WTC11 (cell line): ENCODE measurements at regions of chr12 and their contacts with region 1.

Region 1: GRCh38 chr12:49828133-49829091 is at the start of gene NCKAP5L:
- DNase-seq: peak; percentile 97
- ATAC-seq: peak; percentile 89
- H3K4me3 Mint-ChIP-seq: peak within 1 kb of the TSS; percentile 93
- H3K27ac Mint-ChIP-seq: peak within 1 kb of the TSS; percentile 100
- H3K4me1 Mint-ChIP-seq: peaks cover 33% of the 10 kb centered on the region
- H3K27me3 Mint-ChIP-seq: no peaks in the 10 kb centered on the region; the same call in 1 of the 2 replicates
- CTCF ChIP-seq: no peak
- total RNA-seq, gene NCKAP5L: 22.1 to 27.8 TPM (median 22.4 TPM) in 3 replicates

Region 2: DNA sequence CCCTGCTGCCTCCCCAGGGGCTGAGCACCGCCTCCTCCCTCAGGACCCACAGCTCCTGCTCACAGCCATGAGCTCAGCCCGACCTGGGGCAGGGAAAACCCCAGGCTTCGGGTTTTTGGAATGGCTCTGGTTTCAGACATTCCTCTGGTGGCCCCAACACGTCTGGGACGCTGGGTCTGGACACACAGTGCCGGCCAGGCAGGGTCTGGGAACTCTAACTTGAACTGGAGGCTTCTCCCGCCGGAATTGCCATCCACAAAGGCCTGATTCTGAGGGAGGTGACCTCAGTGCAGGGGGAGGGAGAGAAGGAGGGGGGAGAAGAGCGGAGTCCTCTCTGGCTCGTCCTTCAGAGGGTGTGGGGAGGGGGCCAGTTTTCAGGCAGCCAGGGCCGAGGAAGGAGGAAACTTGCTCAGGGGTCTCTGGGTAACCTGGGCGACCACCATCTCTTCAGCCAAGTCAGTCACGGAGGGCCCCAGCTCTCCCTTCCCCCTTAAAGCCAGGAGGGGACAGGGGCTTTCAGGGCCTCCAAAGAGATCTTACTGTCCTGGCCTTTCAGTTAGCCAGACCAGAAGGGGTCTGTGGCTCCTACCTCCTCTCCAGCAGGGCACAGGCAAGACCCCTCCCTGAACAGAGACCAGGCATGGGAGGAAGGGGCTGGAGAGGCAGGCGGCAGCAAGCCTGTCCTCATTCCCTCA is 19.6 kb before region 1 on chr12:
- CTCF ChIA-PET with region 1: interaction called, 13 read pairs
- POLR2A ChIA-PET with region 1: interaction called, 7 read pairs
- DNase-seq: peak; percentile 36
- ATAC-seq: peak; percentile 9; the same call in 1 of the 2 replicates
- H3K4me3 Mint-ChIP-seq: no peak overlapping the region
- H3K27ac Mint-ChIP-seq: peak overlapping the region; percentile 90
- H3K4me1 Mint-ChIP-seq: peaks cover 42% of the 10 kb centered on the region
- H3K27me3 Mint-ChIP-seq: no peaks in the 10 kb centered on the region
- CTCF ChIP-seq: no peak

Region 3: DNA sequence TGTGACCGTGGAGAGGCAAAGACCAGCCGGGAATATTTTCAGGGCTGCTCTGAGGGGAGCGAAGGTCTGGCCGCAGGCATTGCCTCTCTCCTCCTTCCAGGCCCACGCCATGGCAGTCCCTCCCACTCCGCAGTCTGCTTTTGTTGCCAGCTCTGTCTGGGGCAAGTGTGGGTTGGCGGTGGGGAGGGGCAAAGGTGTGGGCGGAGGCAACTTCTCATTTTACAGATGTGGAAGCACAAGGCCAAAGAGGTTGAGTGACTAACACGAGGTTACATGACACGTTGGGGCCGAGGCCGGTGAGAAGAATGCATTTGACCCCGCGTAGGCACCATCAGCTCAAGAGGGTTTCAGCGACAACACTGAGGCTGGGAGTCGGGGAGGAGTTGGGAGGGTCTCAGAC is 81.4 kb after region 1 on chr12:
- CTCF ChIA-PET with region 1: no interaction called
- POLR2A ChIA-PET with region 1: no interaction called
- DNase-seq: peak; percentile 54
- ATAC-seq: peak; percentile 78
- H3K4me3 Mint-ChIP-seq: no peak overlapping the region
- H3K27ac Mint-ChIP-seq: no peak overlapping the region
- H3K4me1 Mint-ChIP-seq: peaks cover 35% of the 10 kb centered on the region
- H3K27me3 Mint-ChIP-seq: peaks cover 22% of the 10 kb centered on the region
- CTCF ChIP-seq: no peak